ENCODE measurements at regions of chr10 and their contacts with region 1.

Region 1: DNA sequence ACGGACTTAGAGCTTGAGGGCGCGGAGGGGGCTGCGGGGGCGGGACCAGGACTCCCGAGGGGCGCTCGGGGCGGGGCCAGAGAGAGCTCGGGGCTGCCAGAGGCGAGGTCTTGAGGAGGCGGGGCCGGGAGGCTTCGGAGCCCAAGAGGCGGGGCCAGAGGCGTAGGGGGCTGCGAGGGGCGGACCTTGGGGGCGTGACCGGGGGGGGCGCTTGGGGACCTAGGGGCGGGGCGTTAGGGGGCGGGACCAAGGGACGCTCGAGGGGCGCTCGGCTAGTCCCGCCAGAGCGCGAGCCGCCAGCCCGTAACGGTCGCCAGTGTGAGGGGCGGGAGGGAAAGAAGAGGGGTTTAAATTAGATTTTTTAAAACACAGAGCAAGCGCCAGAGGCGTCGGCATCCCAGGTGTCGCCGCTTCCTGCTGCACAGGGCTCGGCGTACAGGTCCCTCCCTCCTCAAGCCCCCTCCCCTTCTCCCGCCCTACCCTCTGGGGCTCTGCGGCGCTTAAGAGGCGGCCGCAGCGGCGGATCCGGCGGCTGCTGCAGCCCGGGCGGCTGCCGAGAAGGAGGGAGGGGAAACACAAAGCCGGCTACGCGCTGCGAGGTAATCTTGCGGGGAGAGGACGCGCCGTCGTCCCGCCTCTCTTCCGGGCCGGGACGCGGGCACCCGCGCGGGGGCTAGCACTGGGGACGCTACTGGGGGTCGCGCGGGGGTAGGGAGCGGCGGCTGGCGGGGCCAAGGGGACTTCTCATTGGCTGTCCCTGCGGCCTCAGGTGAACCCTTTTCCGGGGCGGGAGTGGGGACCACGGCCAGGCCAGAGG is at the start of gene ADD3:
- DNase-seq: peak; percentile 69
- H3K4me3 ChIP-seq: peak within 1 kb of the TSS; percentile 81 to 91 (median 85)
- H3K27ac ChIP-seq: peak within 1 kb of the TSS; percentile 34
- H3K4me1 ChIP-seq: peaks cover 30% of the 10 kb centered on the region
- H3K27me3 ChIP-seq: no peaks in the 10 kb centered on the region
- CTCF ChIP-seq: no peak
- total RNA-seq, gene ADD3: 24.8 to 67.5 TPM

Region 2: GRCh38 chr10:109978481-109978880 is 29.4 kb before region 1 on chr10:
- CTCF ChIA-PET with region 1: interaction called, 3 read pairs
- dilution Hi-C with region 1: no loop called
- in situ Hi-C with region 1: no loop called
- intact Hi-C with region 1: loop called (anchors 2 kb)
- DNase-seq: peak; percentile 26
- H3K4me3 ChIP-seq: no peak overlapping the region
- H3K27ac ChIP-seq: no peak overlapping the region
- H3K4me1 ChIP-seq: no peaks in the 10 kb centered on the region
- H3K27me3 ChIP-seq: no peaks in the 10 kb centered on the region
- CTCF ChIP-seq: peak; percentile 88 to 96

Region 3: GRCh38 chr10:110076559-110077318 is 68.8 kb after region 1 on chr10:
- CTCF ChIA-PET with region 1: no interaction called
- dilution Hi-C with region 1: no loop called
- in situ Hi-C with region 1: no loop called
- intact Hi-C with region 1: loop called (anchors 2 kb)
- DNase-seq: peak; percentile 96
- H3K4me3 ChIP-seq: peak overlapping the region in 2 of 3 experiments; percentile 26 to 33
- H3K27ac ChIP-seq: peak overlapping the region; percentile 82
- H3K4me1 ChIP-seq: peaks cover 44% of the 10 kb centered on the region
- H3K27me3 ChIP-seq: no peaks in the 10 kb centered on the region
- CTCF ChIP-seq: no peak

Region 4: GRCh38 chr10:110137142-110137545 is 129.2 kb after region 1 on chr10:
- CTCF ChIA-PET with region 1: no interaction called
- dilution Hi-C with region 1: no loop called
- in situ Hi-C with region 1: no loop called
- intact Hi-C with region 1: loop called (anchors 5 kb)
- DNase-seq: peak; percentile 61
- H3K4me3 ChIP-seq: no peak overlapping the region
- H3K27ac ChIP-seq: no peak overlapping the region
- H3K4me1 ChIP-seq: peaks cover 15% of the 10 kb centered on the region
- H3K27me3 ChIP-seq: no peaks in the 10 kb centered on the region
- CTCF ChIP-seq: peak; percentile 60 to 72

Region 5: GRCh38 chr10:110279407-110279986 is 271.6 kb after region 1 on chr10:
- CTCF ChIA-PET with region 1: no interaction called
- dilution Hi-C with region 1: no loop called
- in situ Hi-C with region 1: no loop called
- intact Hi-C with region 1: loop called (anchors 10 kb)
- DNase-seq: peak; percentile 43
- H3K4me3 ChIP-seq: no peak overlapping the region
- H3K27ac ChIP-seq: no peak overlapping the region
- H3K4me1 ChIP-seq: peaks cover 7% of the 10 kb centered on the region
- H3K27me3 ChIP-seq: no peaks in the 10 kb centered on the region
- CTCF ChIP-seq: peak; percentile 75

Measured in mammary epithelial cell (primary cell).